ENCODE measurements at regions of chr3 and their contacts with region 1.

Region 1: GRCh38 chr3:69439643-69440270 is 53.9 kb upstream of the FRMD4B start:
- DNase-seq: no peak
- H3K4me3 ChIP-seq: peak overlapping the region in 1 of 2 donors; percentile 36
- H3K27ac ChIP-seq: no peak overlapping the region
- H3K4me1 ChIP-seq: no peaks in the 10 kb centered on the region
- H3K27me3 ChIP-seq: no peaks in the 10 kb centered on the region
- CTCF ChIP-seq: peak; percentile 24 to 64 (median 50)

Region 2: GRCh38 chr3:69665026-69665737 is 225.4 kb after region 1 on chr3:
- intact Hi-C with region 1: loop called (anchors 10 kb)
- DNase-seq: no peak
- H3K4me3 ChIP-seq: no peak overlapping the region
- H3K27ac ChIP-seq: no peak overlapping the region
- H3K4me1 ChIP-seq: no peaks in the 10 kb centered on the region
- H3K27me3 ChIP-seq: no peaks in the 10 kb centered on the region
- CTCF ChIP-seq: no peak

Measured in ascending aorta (tissue), 2 donors.